T-cell (primary cell): ENCODE measurements at regions of chr15 and their contacts with region 1.

Region 1: DNA sequence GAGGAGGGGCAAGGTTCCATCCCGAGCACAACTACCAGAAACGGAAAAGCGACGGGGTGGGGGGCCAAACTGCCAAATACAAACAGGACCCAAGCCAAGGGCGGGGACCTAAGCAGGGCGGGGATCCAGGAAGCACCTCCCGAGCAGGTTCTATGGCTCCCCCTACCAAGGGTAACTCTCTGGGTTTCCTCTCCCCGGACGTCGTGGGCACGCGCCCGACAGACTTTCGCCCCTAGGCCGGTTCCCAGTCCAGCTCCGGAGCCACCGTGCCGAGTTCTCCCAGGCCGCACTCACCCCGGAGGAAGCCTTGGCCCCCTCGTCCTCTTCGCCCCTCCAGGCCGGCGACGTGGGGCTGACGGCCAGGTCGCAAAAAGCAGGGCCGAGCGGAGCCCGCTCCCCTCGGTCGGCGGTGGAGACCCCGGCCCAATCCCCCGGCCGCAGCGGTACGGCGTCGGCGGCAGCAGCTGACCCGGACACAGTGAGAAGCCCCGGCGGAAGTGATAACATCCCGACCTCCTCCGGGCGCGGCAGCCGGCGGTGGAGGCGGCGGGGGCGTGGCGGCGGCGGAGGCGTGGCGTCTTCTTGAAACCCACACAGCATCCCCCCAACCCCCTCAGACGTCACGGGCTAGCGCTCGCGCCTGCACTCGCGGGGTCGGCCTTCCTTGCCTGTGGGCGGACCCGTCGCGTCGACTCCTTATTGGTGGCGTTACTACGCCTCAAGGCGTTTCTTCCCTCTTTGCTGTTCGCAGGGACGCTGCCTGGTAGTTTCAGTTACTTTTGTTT is at the start of gene BNIP2:
- DNase-seq: peak; percentile 95 to 100 (median 100)
- ATAC-seq: peak; percentile 87 to 94 (median 92)
- H3K4me3 ChIP-seq: peak within 1 kb of the TSS; percentile 70 to 85
- H3K4me3 Mint-ChIP-seq: peak within 1 kb of the TSS; percentile 92 to 98 (median 93)
- H3K27ac ChIP-seq: peak within 1 kb of the TSS; percentile 94
- H3K27ac Mint-ChIP-seq: peak within 1 kb of the TSS; percentile 96 to 97
- H3K4me1 ChIP-seq: peaks cover 20 to 29% of the 10 kb centered on the region in 2 experiments
- H3K4me1 Mint-ChIP-seq: peaks cover 49 to 57% (median 55%) of the 10 kb centered on the region in 3 donors
- H3K27me3 ChIP-seq: no peaks in the 10 kb centered on the region
- H3K27me3 Mint-ChIP-seq: no peaks in the 10 kb centered on the region
- total RNA-seq, gene BNIP2: 71.5 to 96.5 (median 79.5) TPM

Region 2: GRCh38 chr15:59360305-59360704 is 328.7 kb before region 1 on chr15:
- CTCF ChIA-PET with region 1: no interaction called
- POLR2A ChIA-PET with region 1: no interaction called
- DNase-seq: no peak
- ATAC-seq: no peak
- H3K4me3 ChIP-seq: no peak overlapping the region
- H3K4me3 Mint-ChIP-seq: no peak overlapping the region
- H3K27ac ChIP-seq: no peak overlapping the region
- H3K27ac Mint-ChIP-seq: no peak overlapping the region
- H3K4me1 ChIP-seq: peaks cover 0 to under 1% of the 10 kb centered on the region in 2 experiments
- H3K4me1 Mint-ChIP-seq: peaks cover 4 to 6% (median 5%) of the 10 kb centered on the region in 3 donors
- H3K27me3 ChIP-seq: no peaks in the 10 kb centered on the region
- H3K27me3 Mint-ChIP-seq: peaks cover 8 to 11% of the 10 kb centered on the region in 2 donors

Region 3: GRCh38 chr15:59725172-59725486 is 36.1 kb after region 1 on chr15:
- CTCF ChIA-PET with region 1: interaction called, 3 to 16 read pairs
- POLR2A ChIA-PET with region 1: no interaction called
- DNase-seq: no peak
- ATAC-seq: no peak
- H3K4me3 ChIP-seq: no peak overlapping the region
- H3K4me3 Mint-ChIP-seq: no peak overlapping the region
- H3K27ac ChIP-seq: no peak overlapping the region
- H3K27ac Mint-ChIP-seq: no peak overlapping the region
- H3K4me1 ChIP-seq: no peaks in the 10 kb centered on the region
- H3K4me1 Mint-ChIP-seq: peaks cover 0 to 2% (median 2%) of the 10 kb centered on the region in 3 donors
- H3K27me3 ChIP-seq: no peaks in the 10 kb centered on the region
- H3K27me3 Mint-ChIP-seq: peaks cover 5 to 11% of the 10 kb centered on the region in 2 donors

Region 4: DNA sequence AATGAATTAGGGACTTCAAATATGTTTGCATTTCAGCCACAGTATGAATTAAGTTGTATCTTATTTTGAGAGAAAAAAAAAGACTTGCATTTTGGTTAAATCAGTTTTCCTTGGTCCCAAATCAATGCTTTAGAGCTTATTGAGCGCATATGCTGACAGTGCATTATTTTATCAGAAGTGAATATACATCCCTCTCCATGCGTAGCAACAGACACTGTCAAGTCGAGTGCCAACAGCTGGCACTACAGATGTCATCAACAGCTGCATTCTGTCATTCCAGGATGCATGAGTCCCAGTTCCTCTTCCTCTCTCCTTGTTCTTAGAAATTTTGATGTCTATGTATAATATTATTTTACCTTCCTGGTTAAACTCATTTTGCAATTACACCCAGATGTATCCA is 158.9 kb after region 1 on chr15:
- CTCF ChIA-PET with region 1: no interaction called
- POLR2A ChIA-PET with region 1: no interaction called
- DNase-seq: no peak
- ATAC-seq: no peak
- H3K4me3 ChIP-seq: no peak overlapping the region
- H3K4me3 Mint-ChIP-seq: no peak overlapping the region
- H3K27ac ChIP-seq: no peak overlapping the region
- H3K27ac Mint-ChIP-seq: no peak overlapping the region
- H3K4me1 ChIP-seq: no peaks in the 10 kb centered on the region
- H3K4me1 Mint-ChIP-seq: peaks cover 0 to 5% (median 0%) of the 10 kb centered on the region in 3 donors
- H3K27me3 ChIP-seq: peaks cover 0 to 6% of the 10 kb centered on the region in 2 experiments
- H3K27me3 Mint-ChIP-seq: peaks cover 0 to 3% of the 10 kb centered on the region in 2 donors

Region 5: DNA sequence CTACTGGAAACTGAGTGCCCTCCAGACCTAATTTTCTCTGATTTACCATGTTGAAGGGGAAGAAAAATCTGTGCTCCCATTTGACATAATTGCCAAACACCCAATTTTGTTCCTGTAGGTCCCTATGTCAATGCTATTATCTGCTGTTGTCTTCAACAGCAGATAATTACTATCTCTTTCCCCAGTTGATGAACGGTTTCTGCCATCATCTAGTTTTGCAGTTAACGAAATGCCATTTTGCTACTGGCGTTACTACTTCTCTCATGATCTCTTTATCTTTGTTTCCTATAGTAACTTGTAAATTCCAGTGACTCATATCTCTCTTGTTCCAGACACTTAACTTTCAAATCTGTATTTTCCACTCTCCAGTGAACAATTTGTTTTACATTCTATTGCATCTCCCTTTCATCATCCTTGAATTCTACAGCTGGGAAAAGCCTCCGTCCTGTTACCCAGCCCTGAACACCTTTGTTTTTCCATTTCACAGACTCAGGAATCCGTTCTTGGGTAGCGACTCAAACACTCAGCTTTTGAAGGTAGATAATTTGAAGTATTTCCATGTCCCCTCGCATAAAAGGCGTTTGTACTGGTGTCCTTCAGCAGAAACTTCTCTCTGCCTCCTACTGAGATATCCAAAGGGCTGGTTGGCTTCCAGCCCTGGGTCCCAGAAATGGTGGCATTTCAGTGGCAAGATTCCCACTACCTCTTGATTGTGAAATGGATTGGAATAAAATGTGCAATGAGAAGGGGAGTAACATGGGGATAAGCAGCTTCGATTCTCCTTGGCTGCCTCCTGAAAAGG is 426.7 kb after region 1 on chr15:
- CTCF ChIA-PET with region 1: no interaction called
- POLR2A ChIA-PET with region 1: no interaction called
- DNase-seq: no peak
- ATAC-seq: no peak
- H3K4me3 ChIP-seq: no peak overlapping the region
- H3K4me3 Mint-ChIP-seq: no peak overlapping the region
- H3K27ac ChIP-seq: no peak overlapping the region
- H3K27ac Mint-ChIP-seq: no peak overlapping the region
- H3K4me1 ChIP-seq: no peaks in the 10 kb centered on the region
- H3K4me1 Mint-ChIP-seq: peaks cover 3 to 7% (median 6%) of the 10 kb centered on the region in 3 donors
- H3K27me3 ChIP-seq: peaks cover 0 to 2% of the 10 kb centered on the region in 2 experiments
- H3K27me3 Mint-ChIP-seq: no peaks in the 10 kb centered on the region